Sciatic nerve (tissue), 2 donors: ENCODE measurements at regions of chr15 and their contacts with region 1.

Region 1: GRCh38 chr15:39573844-39574243 is 7.0 kb upstream of the THBS1 start:
- DNase-seq: no peak
- ATAC-seq: no peak

Region 2: DNA sequence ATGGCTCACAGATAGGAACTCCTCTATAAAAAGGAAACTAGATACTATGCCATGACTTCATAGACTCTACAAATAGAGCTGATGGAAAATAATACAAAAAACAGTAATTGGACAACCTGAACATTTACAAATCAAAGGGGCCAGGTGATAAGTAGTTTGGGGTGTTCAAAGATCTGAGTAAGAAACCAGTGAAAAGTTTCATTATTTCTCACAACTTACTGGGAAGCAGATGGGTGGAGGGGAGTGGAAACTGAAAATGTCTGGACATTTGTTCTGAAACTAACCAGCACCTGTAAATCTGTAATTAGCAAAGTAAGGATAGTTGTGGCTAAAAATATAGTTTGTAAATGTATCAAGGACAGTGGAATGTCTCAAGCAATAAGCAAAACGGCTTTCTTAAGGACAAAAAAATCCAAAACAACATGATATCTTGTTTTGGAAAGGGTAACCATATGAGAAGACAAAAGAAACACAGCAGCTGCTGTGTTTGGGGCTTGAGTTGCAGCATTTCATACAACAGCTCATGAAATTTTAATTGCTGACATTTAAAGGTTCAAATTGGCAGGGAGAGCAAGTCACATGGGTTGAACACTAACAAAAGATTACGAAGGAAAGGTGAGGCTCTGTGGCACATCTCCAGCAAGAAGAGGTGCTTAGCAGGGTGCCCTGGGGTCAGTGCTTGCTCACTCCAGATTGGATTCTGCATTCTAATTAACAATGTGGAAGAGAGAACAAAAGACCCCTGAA is 19.7 kb before region 1 on chr15:
- intact Hi-C with region 1: loop called (anchors 1 kb)
- DNase-seq: no peak
- ATAC-seq: no peak